Ovary (tissue), 10 donors: ENCODE measurements at regions of chr11 and their contacts with region 1.

Region 1: DNA sequence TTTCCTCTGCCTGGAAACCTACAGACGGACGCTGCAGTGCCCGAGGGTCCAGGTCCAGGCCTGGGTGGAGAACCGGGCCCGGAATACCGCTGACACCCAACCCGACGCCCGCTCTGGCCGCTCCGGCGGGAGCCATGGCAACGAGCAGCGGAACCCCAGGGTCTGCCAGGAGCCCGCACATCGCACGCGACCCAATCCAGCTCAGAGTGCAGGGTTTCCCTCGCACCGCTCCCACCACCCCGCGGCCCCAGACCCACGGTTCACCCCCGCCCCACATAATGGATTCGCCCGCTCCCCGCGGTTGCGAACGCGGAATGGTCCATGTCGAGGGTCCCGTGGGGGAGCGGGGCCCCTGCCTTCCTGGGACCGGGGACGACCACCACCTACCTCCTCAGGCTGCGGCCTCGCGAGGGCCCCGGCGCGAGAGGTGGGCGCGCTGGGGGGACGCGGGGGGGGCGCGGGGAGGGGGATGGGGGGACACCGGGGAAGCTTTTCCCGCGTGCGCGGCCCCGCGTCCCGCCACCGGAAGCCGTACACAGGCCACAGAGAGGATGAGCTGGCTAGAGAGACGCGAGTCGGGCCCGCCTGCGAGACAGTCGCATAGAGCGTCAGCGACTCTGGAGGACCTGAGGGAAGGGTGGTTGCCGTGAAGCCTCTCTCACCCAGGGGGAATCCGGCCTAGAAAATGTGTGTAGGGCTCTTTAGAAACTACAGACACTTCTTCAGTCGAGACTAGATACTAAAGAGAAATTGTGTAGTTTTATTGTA is at the start of gene SSRP1:
- DNase-seq: peak; percentile 85 to 91 (median 87)
- H3K4me3 ChIP-seq: peak within 1 kb of the TSS; percentile 83
- H3K27ac ChIP-seq: peak within 1 kb of the TSS; percentile 82 to 84
- H3K4me1 ChIP-seq: peaks cover 6% of the 10 kb centered on the region
- H3K27me3 ChIP-seq: no peaks in the 10 kb centered on the region
- CTCF ChIP-seq: no peak
- EP300 ChIP-seq: no peak
- POLR2A ChIP-seq: peak; percentile 51
- total RNA-seq, gene SSRP1: 43.3 to 105 (median 87.7) TPM

Region 2: GRCh38 chr11:57213342-57214095 is 122.0 kb before region 1 on chr11:
- intact Hi-C with region 1: no loop called
- DNase-seq: no peak
- H3K4me3 ChIP-seq: no peak overlapping the region
- H3K27ac ChIP-seq: no peak overlapping the region
- H3K4me1 ChIP-seq: no peaks in the 10 kb centered on the region
- H3K27me3 ChIP-seq: no peaks in the 10 kb centered on the region
- CTCF ChIP-seq: no peak
- EP300 ChIP-seq: no peak
- POLR2A ChIP-seq: no peak

Region 3: GRCh38 chr11:57426929-57427726 is 91.6 kb after region 1 on chr11 and contains the start of gene SLC43A3:
- intact Hi-C with region 1: loop called in 2 of 4 experiments (anchors 5 to 10 kb)
- DNase-seq: peak; percentile 83 to 86 (median 85)
- H3K4me3 ChIP-seq: peak within 1 kb of the TSS; percentile 57
- H3K27ac ChIP-seq: peak within 1 kb of the TSS; percentile 93 to 98
- H3K4me1 ChIP-seq: peaks cover 23% of the 10 kb centered on the region
- H3K27me3 ChIP-seq: no peaks in the 10 kb centered on the region
- CTCF ChIP-seq: peak in 1 of 3 donors; percentile 16
- EP300 ChIP-seq: no peak
- POLR2A ChIP-seq: peak; percentile 71
- total RNA-seq, gene SLC43A3: 17.0 to 47.2 (median 36.3) TPM